CD4-positive, alpha-beta memory T cell (primary cell): ENCODE measurements at regions of chr22 and their contacts with region 1.

Region 1: DNA sequence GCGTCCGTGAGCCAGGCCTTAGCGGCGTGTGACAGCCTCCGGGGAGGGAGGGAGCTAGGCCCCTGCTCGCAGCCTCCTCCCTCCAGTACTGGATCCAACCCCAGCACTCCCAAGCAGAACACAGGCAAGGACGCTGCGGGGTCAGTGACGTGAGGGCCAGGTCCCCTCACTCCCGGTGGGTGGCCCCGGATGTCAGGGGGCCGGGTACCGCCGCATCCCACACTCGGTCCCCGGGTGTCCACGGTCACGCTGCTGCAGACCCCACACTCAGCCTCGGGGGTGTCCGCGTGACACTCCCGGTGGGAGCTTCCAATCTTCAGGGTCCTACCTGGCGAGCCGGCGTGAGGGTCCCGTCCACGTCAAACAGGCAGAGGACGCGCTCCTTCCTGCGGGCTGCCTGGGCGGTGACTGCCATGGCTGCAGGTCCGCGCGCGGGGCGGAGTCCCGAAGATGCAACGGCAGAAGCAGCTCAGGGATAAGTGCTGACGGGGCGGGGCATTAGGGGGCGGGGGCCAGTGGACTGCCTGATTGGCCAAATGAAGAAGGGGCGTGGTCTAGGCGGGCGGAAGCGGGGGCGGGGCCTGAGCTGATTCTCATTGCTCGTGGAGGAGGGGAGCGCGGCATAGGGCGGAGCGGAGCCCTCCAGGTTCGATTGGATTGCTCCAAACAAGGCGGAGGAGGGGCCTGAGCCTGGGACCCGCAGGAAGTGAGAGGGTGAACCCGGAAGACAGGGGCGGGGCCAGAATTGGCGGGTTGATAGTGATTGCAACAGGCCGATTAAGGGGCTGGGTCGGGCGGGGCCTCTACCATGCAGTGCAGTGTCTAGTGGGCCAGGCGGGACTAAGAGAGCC is at the start of gene PMM1:
- DNase-seq: peak; percentile 100
- H3K4me3 ChIP-seq: peak within 1 kb of the TSS; percentile 84 to 89
- H3K4me3 Mint-ChIP-seq: peak within 1 kb of the TSS; percentile 92 to 97 (median 94)
- H3K27ac ChIP-seq: peak within 1 kb of the TSS; percentile 60
- H3K27ac Mint-ChIP-seq: peak within 1 kb of the TSS; percentile 38 to 94 (median 90)
- H3K4me1 ChIP-seq: peaks cover 10% of the 10 kb centered on the region
- H3K4me1 Mint-ChIP-seq: peaks cover 5 to 27% (median 17%) of the 10 kb centered on the region in 4 donors
- H3K27me3 ChIP-seq: no peaks in the 10 kb centered on the region
- H3K27me3 Mint-ChIP-seq: no peaks in the 10 kb centered on the region
- total RNA-seq, gene PMM1: 31.7 to 32.9 TPM

Region 2: DNA sequence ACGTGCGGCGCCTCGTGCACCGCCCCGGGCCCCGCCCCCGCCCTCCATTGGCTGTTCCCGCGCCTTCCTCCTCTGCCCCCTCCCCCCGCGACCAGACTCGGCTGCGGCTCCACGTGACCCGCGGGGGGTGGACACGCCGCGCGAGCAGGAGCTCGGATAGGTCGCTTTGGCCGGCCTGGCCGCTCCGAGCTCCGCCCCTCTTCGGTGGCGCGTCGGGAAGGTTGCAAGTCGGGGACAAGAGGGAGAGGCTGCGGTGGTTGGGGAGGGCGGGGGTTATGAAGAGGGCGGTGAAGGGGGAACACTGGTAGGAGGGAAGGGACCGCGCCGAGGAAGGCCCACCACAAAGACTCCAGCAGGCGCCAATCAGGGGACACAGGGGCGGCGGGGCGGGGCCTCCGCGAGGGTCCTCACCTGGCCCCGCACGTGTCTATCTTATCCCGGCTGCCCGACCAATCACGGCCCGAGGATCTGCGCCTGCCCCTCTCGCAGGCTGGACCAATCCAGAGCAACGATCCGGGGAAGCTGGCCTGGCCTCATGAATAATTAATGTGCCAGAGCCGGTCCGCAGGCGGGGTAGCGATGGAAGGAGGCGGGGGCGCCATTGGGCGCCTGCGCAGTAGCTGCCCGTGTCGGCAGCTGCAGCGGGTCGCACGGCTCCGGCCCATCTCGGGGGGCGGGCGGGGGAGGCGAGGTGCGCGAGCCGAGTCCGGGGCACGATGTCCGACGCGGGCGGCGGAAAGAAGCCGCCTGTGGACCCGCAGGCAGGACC is 208.1 kb before region 1 on chr22 and contains the start of gene TEF:
- CTCF ChIA-PET with region 1: interaction called, 3 read pairs
- POLR2A ChIA-PET with region 1: interaction called, 18 read pairs
- intact Hi-C with region 1: loop called (anchors 1 kb)
- DNase-seq: peak; percentile 99
- H3K4me3 ChIP-seq: peak within 1 kb of the TSS; percentile 65 to 88
- H3K4me3 Mint-ChIP-seq: peak within 1 kb of the TSS; percentile 90 to 97 (median 94)
- H3K27ac ChIP-seq: peak within 1 kb of the TSS; percentile 87
- H3K27ac Mint-ChIP-seq: peak within 1 kb of the TSS; percentile 98 to 99 (median 98)
- H3K4me1 ChIP-seq: peaks cover 18% of the 10 kb centered on the region
- H3K4me1 Mint-ChIP-seq: peaks cover 12 to 36% (median 22%) of the 10 kb centered on the region in 4 donors
- H3K27me3 ChIP-seq: no peaks in the 10 kb centered on the region
- H3K27me3 Mint-ChIP-seq: no peaks in the 10 kb centered on the region
- total RNA-seq, gene TEF: 6.5 to 8.8 TPM

Region 3: DNA sequence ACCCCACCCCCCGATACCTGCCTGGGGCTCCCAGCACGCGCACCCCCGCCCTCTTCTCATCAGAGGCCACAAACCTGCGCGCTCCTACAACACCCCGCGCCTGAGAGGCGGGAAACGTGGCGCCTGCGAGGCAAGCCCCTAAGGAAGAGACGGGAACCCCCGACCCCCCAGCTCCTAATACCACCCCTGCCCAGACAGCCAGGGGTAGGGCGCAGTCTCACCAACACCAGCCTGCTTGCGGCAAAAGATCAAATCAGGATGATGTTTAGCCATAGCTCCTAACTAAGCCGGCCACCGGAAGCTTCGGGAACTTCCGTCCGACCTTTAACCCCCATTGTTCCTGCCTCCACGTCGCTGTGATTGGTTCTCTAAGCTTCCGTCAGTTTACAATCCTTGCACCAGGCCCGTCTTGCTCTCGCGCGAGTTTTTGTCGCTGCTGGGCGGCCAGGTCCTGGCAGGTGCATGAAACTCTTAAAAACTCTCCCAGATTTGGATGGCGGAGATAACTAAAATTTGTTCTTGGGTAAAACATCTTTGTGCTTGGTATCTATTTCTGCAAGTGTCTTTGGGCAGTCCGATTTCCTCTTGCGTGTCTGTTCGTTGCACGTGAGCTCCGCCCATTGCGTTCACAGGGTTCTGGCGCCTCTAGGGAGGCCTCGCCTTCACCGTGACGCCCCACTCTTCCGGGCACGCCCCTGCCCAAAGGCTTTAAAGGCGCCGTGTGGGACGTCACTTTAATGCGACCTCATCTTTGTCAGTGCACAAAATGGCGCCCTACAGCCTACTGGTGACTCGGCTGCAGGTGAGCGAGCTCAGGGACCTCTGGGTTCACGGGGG is 121.0 kb before region 1 on chr22 and contains the starts of genes ACO2 and PHF5A:
- CTCF ChIA-PET with region 1: no interaction called
- POLR2A ChIA-PET with region 1: interaction called, 7 read pairs
- intact Hi-C with region 1: loop called (anchors 1 kb)
- DNase-seq: peak; percentile 98
- H3K4me3 ChIP-seq: peak within 1 kb of the TSS; percentile 67 to 90
- H3K4me3 Mint-ChIP-seq: peak within 1 kb of the TSS; percentile 86 to 95 (median 92)
- H3K27ac ChIP-seq: peak within 1 kb of the TSS; percentile 89
- H3K27ac Mint-ChIP-seq: peak within 1 kb of the TSS; percentile 96 to 100 (median 99)
- H3K4me1 ChIP-seq: peaks cover 28% of the 10 kb centered on the region
- H3K4me1 Mint-ChIP-seq: peaks cover 29 to 56% (median 44%) of the 10 kb centered on the region in 4 donors
- H3K27me3 ChIP-seq: no peaks in the 10 kb centered on the region
- H3K27me3 Mint-ChIP-seq: no peaks in the 10 kb centered on the region
- total RNA-seq, gene ACO2: 64.8 to 65.0 TPM
- total RNA-seq, gene PHF5A: 37.7 to 39.2 TPM

Region 4: DNA sequence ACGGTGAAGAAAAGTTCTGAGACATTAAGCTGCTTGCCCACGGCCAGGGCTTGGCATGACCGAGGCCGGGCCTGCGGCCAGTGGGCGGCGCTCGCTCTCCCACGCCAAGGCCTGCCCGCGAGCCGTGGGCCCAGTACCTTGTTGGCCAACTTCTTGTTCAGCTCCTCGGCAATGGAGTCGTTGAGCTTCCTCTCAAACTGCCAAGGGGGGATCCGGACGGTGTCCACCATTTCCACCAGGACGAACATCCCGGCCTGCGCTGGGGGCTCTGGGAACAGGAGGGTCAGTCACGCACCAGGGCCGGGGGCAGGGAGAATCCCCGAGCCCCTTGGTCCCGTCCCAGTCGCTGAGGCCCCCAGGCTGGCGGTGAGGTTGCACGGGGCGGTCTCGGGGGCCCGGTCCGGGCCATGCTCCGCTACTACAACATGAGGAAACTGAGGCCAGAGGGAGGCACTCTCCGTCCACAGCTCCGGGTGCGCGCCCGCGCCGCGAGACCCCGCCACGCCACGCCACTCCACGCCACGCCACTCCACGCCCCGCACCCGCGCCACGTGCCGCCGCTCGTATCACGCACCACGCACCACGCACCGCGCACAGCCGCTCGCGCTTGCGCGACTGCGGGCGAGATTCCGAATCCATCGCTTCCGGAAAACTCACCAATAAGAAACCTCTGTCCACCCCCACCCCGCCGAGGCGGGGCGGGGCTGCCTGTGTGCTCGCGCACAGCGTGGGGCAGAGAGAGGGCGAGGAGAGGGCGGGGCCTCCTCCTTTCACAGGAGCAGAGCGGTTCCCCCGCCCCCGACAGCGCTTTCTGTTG is 45.6 kb before region 1 on chr22 and contains the start of gene POLR3H:
- CTCF ChIA-PET with region 1: no interaction called
- POLR2A ChIA-PET with region 1: interaction called, 12 read pairs
- intact Hi-C with region 1: loop called (anchors 1 kb)
- DNase-seq: peak; percentile 95 to 97 (median 95)
- H3K4me3 ChIP-seq: peak within 1 kb of the TSS; percentile 78
- H3K4me3 Mint-ChIP-seq: peak within 1 kb of the TSS; percentile 95 to 98 (median 98)
- H3K27ac ChIP-seq: peak within 1 kb of the TSS; percentile 77
- H3K27ac Mint-ChIP-seq: peak within 1 kb of the TSS; percentile 90 to 98 (median 96)
- H3K4me1 ChIP-seq: peaks cover 26% of the 10 kb centered on the region
- H3K4me1 Mint-ChIP-seq: peaks cover 29 to 48% (median 41%) of the 10 kb centered on the region in 4 donors
- H3K27me3 ChIP-seq: no peaks in the 10 kb centered on the region
- H3K27me3 Mint-ChIP-seq: no peaks in the 10 kb centered on the region
- total RNA-seq, gene POLR3H: 43.6 to 43.7 TPM

Region 5: GRCh38 chr22:41603873-41604332 is 14.3 kb after region 1 on chr22:
- CTCF ChIA-PET with region 1: interaction called, 9 read pairs
- POLR2A ChIA-PET with region 1: interaction called, 13 read pairs
- intact Hi-C with region 1: no loop called
- DNase-seq: peak; percentile 81 to 93 (median 83)
- H3K4me3 ChIP-seq: no peak overlapping the region
- H3K4me3 Mint-ChIP-seq: peak overlapping the region; percentile 43 to 79 (median 58)
- H3K27ac ChIP-seq: no peak overlapping the region
- H3K27ac Mint-ChIP-seq: peak overlapping the region; percentile 42 to 95 (median 85)
- H3K4me1 ChIP-seq: peaks cover 28% of the 10 kb centered on the region
- H3K4me1 Mint-ChIP-seq: peaks cover 18 to 38% (median 23%) of the 10 kb centered on the region in 4 donors
- H3K27me3 ChIP-seq: no peaks in the 10 kb centered on the region
- H3K27me3 Mint-ChIP-seq: peaks cover 0 to 2% of the 10 kb centered on the region in 2 donors

Region 6: GRCh38 chr22:41621099-41621910 is 31.7 kb after region 1 on chr22 and contains the start of gene XRCC6:
- CTCF ChIA-PET with region 1: interaction called, 7 read pairs
- POLR2A ChIA-PET with region 1: interaction called, 74 read pairs
- intact Hi-C with region 1: loop called (anchors 1 kb)
- DNase-seq: peak; percentile 99 to 100 (median 99)
- H3K4me3 ChIP-seq: peak within 1 kb of the TSS; percentile 76 to 90
- H3K4me3 Mint-ChIP-seq: peak within 1 kb of the TSS; percentile 93 to 100 (median 98)
- H3K27ac ChIP-seq: peak within 1 kb of the TSS; percentile 100
- H3K27ac Mint-ChIP-seq: peak within 1 kb of the TSS; percentile 98 to 100 (median 99)
- H3K4me1 ChIP-seq: peaks cover 45% of the 10 kb centered on the region
- H3K4me1 Mint-ChIP-seq: peaks cover 23 to 52% (median 34%) of the 10 kb centered on the region in 4 donors
- H3K27me3 ChIP-seq: no peaks in the 10 kb centered on the region
- H3K27me3 Mint-ChIP-seq: no peaks in the 10 kb centered on the region
- total RNA-seq, gene XRCC6: 174 to 181 TPM

Region 7: DNA sequence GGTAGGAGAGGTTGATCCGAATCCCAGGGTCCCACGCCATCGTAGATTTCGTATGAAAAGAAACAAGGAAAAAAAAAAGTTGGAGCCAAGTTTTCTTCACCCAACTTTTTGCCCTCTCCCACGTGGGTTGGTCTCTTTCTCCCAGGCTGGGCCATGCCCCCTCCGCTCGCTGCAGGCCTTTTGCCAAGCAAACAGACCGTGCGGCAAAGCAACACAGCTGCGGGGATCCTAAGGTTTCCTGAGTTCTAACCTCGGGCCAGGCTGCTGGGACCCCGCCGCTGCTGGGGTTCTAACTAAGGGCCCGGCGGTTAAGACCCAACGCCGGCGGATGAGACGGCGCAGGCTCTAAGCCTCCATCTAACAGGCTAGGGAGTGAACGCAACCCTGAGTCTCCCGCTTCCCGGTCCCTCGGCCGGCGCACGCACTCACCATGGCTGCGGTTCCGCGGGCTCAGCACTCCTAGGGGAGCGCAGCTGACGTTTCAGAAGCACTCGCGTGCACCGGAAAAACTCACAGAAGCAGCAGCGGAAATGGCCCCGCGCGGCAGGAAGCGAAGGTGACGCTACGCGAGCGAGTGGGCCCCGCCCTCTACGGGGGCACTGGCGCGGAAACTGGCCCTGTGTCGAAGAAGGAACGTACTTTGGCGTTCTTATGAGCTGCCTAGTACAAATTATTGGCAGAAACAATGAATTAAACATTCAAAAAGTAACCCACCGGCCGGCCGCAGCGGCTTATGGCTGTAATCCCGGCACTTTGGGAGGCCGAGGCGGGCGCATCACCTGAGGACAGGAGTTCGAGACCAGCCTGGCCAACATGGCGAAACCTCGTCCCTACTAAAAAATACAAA is 99.0 kb after region 1 on chr22 and contains the start of gene SNU13:
- CTCF ChIA-PET with region 1: no interaction called
- POLR2A ChIA-PET with region 1: interaction called, 11 read pairs
- intact Hi-C with region 1: no loop called
- DNase-seq: peak; percentile 91 to 95 (median 92)
- H3K4me3 ChIP-seq: peak within 1 kb of the TSS; percentile 75 to 96
- H3K4me3 Mint-ChIP-seq: peak within 1 kb of the TSS; percentile 94 to 99 (median 97)
- H3K27ac ChIP-seq: peak within 1 kb of the TSS; percentile 95
- H3K27ac Mint-ChIP-seq: peak within 1 kb of the TSS; percentile 95 to 99 (median 98)
- H3K4me1 ChIP-seq: peaks cover 37% of the 10 kb centered on the region
- H3K4me1 Mint-ChIP-seq: peaks cover 21 to 48% (median 33%) of the 10 kb centered on the region in 4 donors
- H3K27me3 ChIP-seq: no peaks in the 10 kb centered on the region
- H3K27me3 Mint-ChIP-seq: no peaks in the 10 kb centered on the region
- total RNA-seq, gene SNU13: 123 to 129 TPM